HCT116 (cell line): ENCODE measurements at regions of chr4 and their contacts with region 1.

Region 1: DNA sequence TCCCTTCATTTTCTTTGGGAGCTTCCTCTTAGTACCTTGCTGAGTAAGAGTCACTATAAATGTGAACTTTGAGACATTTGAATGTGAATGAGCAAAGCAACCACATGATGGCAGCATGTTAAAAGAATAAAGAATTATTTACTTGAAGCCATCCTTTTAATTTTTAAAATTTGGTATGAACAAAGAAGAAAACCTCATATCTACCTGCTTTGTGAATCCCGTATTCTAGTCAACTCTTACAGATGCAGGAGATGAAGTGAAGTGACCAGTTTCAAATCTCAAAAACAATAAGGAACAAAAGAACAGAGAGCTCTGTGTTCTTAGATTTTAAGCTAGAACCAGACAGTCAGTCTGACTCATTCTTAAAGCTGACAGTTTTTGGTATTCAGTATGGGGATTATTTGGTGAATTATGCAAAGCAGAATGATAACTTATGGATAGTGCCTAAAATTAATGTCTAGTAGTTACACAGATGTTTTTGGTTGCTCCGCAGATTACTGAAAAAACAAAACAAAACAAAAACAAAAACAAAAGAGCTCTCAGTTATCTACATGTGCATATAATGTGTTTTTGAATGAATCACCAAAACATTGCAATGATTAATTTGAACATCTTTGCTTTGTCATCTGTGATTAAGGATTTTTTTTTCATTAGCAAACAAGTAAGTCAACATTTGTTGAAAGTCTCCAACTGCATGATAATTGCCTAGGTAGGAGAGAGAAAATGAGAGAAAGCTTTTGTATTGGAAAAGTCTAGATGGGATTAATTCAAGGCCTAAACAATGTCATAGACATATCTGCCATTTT is 48.2 kb upstream of the H2AZ1 start:
- DNase-seq: peak; percentile 37
- ATAC-seq: peak; percentile 77
- H3K4me3 ChIP-seq: no peak overlapping the region
- H3K27ac ChIP-seq: no peak overlapping the region
- H3K4me1 ChIP-seq: peaks cover 0 to 6% of the 10 kb centered on the region in 2 experiments; a peak in 2 of 4 replicates
- H3K27me3 ChIP-seq: no peaks in the 10 kb centered on the region
- CTCF ChIP-seq: peak; percentile 22 to 57 (median 52); a peak in 4 of 6 replicates
- POLR2A ChIP-seq: no peak
- RAD21 ChIP-seq: peak; percentile 67

Region 2: DNA sequence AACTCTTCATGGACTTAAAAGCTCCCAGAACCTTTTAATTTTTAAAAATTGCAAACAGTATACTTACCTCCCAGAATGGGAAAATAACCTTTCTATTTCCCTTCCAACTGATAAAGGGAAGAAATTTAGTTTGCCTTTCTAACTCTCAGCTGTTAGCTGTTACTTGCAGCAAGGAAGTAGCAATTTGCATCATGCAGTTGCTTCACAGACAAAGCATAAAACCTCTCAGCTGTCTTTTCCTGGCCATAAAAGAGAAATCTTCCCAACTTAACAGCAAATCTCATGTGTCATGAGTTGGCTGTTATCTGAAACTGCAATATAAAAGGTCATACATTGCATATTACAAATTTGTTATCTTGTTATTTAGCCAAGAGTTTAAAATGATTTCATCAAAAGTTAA is 469.0 kb before region 1 on chr4:
- CTCF ChIA-PET with region 1: no interaction called
- POLR2A ChIA-PET with region 1: no interaction called
- RAD21 ChIA-PET with region 1: no interaction called
- intact Hi-C with region 1: no loop called
- DNase-seq: no peak
- ATAC-seq: no peak
- H3K4me3 ChIP-seq: no peak overlapping the region
- H3K27ac ChIP-seq: no peak overlapping the region
- H3K4me1 ChIP-seq: no peaks in the 10 kb centered on the region
- H3K27me3 ChIP-seq: no peaks in the 10 kb centered on the region
- CTCF ChIP-seq: no peak
- POLR2A ChIP-seq: no peak
- RAD21 ChIP-seq: no peak

Region 3: GRCh38 chr4:100060765-100061416 is 62.6 kb after region 1 on chr4:
- CTCF ChIA-PET with region 1: interaction called, 19 read pairs
- POLR2A ChIA-PET with region 1: no interaction called
- RAD21 ChIA-PET with region 1: no interaction called
- intact Hi-C with region 1: loop called (anchors 1 kb)
- DNase-seq: no peak
- ATAC-seq: no peak
- H3K4me3 ChIP-seq: no peak overlapping the region
- H3K27ac ChIP-seq: no peak overlapping the region
- H3K4me1 ChIP-seq: no peaks in the 10 kb centered on the region
- H3K27me3 ChIP-seq: no peaks in the 10 kb centered on the region
- CTCF ChIP-seq: no peak
- POLR2A ChIP-seq: no peak
- RAD21 ChIP-seq: no peak

Region 4: DNA sequence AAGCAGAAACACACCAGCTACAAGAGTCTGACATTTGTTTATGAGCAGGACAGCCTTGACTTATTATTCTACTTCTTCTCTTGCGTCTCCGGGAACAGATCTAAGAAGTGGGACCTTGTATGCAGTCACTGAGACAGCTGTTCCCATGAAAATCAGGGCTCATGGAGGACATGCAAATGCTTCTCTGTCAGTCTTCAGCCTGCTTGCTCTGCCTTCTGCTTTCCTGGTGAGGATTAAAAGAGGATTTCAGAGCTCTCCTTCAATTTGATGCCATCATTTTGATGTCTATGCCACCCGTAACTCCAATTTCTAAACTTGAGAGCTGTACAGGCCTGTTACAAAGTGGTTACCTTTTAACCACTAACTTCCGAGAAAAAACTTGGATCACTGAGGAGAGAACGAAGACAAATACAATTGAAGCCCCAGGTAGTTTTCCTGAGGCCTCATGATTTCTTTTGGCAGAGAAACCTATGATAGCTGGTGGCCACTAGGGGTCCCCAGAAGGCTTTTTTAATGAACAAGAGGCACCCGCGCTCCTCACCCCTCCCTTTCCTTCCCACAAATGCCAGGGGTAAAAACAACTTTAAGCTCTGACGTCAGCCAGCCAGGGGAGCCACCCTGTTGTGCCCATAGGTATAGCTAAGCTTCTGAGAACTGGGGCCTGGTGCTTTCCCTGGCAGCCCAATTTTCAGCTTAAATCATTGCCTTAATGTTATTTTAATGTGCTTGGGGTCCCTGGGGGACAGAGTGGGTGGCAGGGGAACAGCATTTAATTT is 95.0 kb after region 1 on chr4:
- CTCF ChIA-PET with region 1: interaction called, 30 read pairs
- POLR2A ChIA-PET with region 1: interaction called, 4 read pairs
- RAD21 ChIA-PET with region 1: interaction called, 3 to 4 read pairs
- intact Hi-C with region 1: loop called (anchors 1 kb)
- DNase-seq: peak; percentile 93
- ATAC-seq: peak; percentile 94
- H3K4me3 ChIP-seq: no peak overlapping the region
- H3K27ac ChIP-seq: no peak overlapping the region
- H3K4me1 ChIP-seq: peaks cover 7 to 26% of the 10 kb centered on the region in 2 experiments; a peak in 3 of 4 replicates
- H3K27me3 ChIP-seq: no peaks in the 10 kb centered on the region
- CTCF ChIP-seq: peak; percentile 71 to 86 (median 80)
- POLR2A ChIP-seq: no peak
- RAD21 ChIP-seq: peak; percentile 91

Region 5: GRCh38 chr4:100742045-100742444 is 743.8 kb after region 1 on chr4:
- CTCF ChIA-PET with region 1: interaction called, 11 read pairs
- POLR2A ChIA-PET with region 1: no interaction called
- RAD21 ChIA-PET with region 1: no interaction called
- intact Hi-C with region 1: loop called (anchors 10 kb)
- DNase-seq: peak; percentile 63
- ATAC-seq: peak; percentile 62
- H3K4me3 ChIP-seq: no peak overlapping the region
- H3K27ac ChIP-seq: no peak overlapping the region
- H3K4me1 ChIP-seq: peaks cover 12 to 19% of the 10 kb centered on the region in 2 experiments
- H3K27me3 ChIP-seq: no peaks in the 10 kb centered on the region
- CTCF ChIP-seq: peak; percentile 34 to 64 (median 59); a peak in 5 of 6 replicates
- POLR2A ChIP-seq: no peak
- RAD21 ChIP-seq: peak; percentile 71